Sigmoid colon (tissue), 7 donors: ENCODE measurements at regions of chr13 and their contacts with region 1.

Region 1: DNA sequence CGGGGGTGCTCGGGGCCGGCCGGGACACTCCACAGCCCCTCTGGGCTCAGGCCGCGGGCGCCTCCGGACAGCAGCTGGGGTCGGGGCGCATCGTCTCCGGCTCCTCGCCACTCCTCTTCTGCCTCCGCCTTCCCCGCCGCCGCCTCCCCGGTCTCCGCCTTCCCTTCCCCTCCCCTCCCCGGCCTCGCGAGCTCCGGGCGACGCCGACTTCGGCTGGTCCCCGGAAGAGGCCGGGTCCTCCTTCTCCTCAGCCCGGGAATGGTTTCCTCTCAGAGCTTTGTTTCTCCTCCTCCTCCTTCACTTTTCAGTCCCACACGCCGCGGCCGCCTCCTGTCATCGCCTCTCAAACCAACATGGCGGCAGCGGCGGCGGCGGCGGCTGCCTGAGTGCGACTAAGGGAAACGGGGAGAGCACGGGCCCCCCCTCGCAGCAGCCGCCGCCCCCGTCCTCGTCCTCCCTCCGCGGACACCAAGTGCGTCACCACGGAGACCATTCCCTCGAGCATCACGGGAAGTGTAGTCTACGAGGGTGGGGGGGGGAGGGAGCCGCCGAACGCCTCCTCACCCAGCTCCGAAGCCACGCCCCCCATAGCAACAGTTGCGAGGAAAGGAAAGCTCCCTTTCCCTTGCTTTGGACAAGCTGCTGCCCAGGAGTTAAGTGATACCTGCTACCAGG is at the start of gene UBL3:
- DNase-seq: peak; percentile 99
- H3K4me3 ChIP-seq: peak within 1 kb of the TSS; percentile 84 to 92 (median 88)
- H3K27ac ChIP-seq: peak within 1 kb of the TSS; percentile 97 to 99 (median 98)
- H3K4me1 ChIP-seq: peaks cover 0 to 22% (median 17%) of the 10 kb centered on the region in 4 donors
- H3K27me3 ChIP-seq: no peaks in the 10 kb centered on the region
- CTCF ChIP-seq: no peak
- EP300 ChIP-seq: peak in 1 of 4 donors; percentile 36
- POLR2A ChIP-seq: peak; percentile 71 to 80
- total RNA-seq, gene UBL3: 35.6 to 44.6 (median 40.6) TPM

Region 2: DNA sequence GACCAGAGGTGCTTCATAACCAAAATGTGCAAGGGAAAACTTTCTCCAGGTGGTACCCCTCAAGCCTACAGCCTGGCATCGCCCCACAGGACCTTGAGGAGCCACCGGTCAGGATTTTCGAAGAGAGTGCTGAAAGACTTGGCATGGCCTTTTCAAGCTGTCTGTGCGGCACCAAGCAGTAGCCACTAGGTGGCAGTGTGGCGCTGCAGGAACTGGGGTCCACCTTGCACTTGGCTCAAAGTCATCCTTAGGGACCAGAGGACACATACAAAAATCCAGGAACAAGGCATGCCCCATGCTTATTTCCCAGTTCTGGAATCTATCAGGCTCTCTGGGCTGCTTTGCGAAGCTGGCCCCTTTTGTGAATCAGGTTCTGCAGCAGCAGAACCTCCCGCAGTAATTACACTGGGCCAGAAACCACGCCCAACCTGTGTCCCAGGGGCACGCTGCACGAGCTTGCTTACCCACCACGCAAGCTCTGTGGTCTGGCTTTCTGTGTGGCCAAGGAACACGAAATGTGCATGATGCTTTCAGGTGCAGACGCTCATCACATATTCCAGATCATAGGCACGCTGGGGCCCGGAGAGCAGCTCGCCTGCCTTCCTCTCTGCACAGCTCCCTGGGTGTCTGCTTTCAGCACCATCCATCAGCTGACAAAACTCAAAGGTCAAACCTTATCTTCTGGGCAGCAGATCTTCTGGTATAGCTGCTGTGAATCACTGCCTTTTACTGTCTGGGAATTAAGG is 342.1 kb before region 1 on chr13:
- intact Hi-C with region 1: loop called (anchors 2 kb)
- DNase-seq: peak; percentile 93
- H3K4me3 ChIP-seq: no peak overlapping the region
- H3K27ac ChIP-seq: peak overlapping the region in 2 of 4 donors; percentile 12 to 58
- H3K4me1 ChIP-seq: peaks cover 0 to 34% (median 28%) of the 10 kb centered on the region in 4 donors
- H3K27me3 ChIP-seq: no peaks in the 10 kb centered on the region
- CTCF ChIP-seq: peak; percentile 86 to 98 (median 94)
- EP300 ChIP-seq: no peak
- POLR2A ChIP-seq: no peak

Region 3: DNA sequence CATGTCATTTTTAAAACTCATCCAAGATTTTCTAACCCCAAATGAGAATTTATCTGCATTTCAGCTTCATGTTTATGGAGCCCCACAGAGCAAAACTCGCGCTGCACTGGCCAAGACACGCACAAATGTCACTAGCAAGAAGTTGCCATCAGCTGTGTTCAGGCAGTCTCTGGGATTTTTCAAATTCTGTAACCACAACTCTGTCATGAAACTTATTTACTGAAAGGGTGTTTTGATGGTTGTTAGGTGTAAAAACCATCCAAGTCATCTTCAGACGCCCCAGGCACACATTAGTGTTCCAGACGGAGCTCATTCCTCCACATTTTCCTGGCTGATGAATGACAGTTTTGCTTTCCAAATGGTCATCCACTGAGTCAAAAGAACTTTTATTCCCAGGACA is 318.2 kb before region 1 on chr13:
- intact Hi-C with region 1: no loop called
- DNase-seq: no peak
- H3K4me3 ChIP-seq: no peak overlapping the region
- H3K27ac ChIP-seq: no peak overlapping the region
- H3K4me1 ChIP-seq: peaks cover 0 to 20% (median 2%) of the 10 kb centered on the region in 4 donors
- H3K27me3 ChIP-seq: no peaks in the 10 kb centered on the region
- CTCF ChIP-seq: no peak
- EP300 ChIP-seq: no peak
- POLR2A ChIP-seq: no peak

Region 4: DNA sequence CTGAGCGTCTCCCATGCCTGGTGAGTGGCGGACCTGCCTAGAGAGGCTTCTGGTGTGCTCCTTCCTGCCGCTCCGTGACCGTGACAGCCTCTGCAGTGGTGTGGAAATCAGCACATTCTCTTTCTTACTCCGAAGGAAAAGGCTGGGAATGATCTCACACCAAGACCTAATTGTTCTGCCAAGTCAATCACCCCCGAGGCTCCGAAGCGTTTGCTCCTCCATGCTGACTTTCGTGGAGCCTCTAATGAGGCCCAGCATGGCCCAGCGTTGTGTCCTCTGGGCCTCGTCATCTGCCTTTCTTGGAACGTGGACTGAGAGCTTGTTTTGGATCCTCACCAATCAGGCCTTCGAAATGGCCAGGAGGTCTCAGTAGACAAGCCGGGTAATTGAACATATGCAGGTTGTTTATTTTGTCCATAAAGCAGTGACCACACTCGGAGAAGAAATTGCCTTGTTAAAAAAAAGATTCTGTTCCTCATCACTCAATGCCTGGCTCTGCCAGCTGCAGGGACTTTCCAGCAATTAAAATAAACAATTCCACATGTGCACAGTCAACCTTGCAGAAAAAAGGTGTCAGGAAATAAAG is 107.1 kb before region 1 on chr13:
- intact Hi-C with region 1: loop called (anchors 5 kb)
- DNase-seq: peak; percentile 96
- H3K4me3 ChIP-seq: peak overlapping the region in 1 of 4 donors; percentile 15
- H3K27ac ChIP-seq: peak overlapping the region; percentile 52 to 86 (median 82)
- H3K4me1 ChIP-seq: peaks cover 0 to 30% (median 24%) of the 10 kb centered on the region in 4 donors
- H3K27me3 ChIP-seq: no peaks in the 10 kb centered on the region
- CTCF ChIP-seq: no peak
- EP300 ChIP-seq: peak; percentile 48 to 80 (median 72)
- POLR2A ChIP-seq: no peak

Region 5: GRCh38 chr13:29771247-29771646 is 79.1 kb before region 1 on chr13:
- intact Hi-C with region 1: loop called (anchors 5 kb)
- DNase-seq: no peak
- H3K4me3 ChIP-seq: no peak overlapping the region
- H3K27ac ChIP-seq: no peak overlapping the region
- H3K4me1 ChIP-seq: no peaks in the 10 kb centered on the region
- H3K27me3 ChIP-seq: no peaks in the 10 kb centered on the region
- CTCF ChIP-seq: peak in 2 of 4 experiments; percentile 24 to 47
- EP300 ChIP-seq: no peak
- POLR2A ChIP-seq: no peak

Region 6: DNA sequence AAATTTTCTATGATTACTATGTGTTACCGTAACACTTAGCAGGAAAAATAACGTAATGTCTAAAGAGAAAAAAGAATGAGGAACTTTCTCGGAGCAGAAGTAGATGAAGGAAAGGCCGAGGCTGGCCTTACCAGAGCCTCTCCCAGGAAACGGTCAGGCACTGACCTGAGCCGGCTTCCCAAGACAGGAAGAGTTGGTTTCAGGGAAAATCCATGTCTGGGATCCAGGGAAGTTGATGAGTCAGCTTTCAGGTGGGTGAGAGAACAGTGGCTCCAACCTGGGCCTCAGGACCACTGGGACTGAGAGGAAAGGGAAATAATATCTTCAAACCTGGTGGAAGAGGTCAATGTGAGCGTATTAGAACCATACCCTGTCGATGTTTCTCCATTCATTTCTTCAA is 93.3 kb after region 1 on chr13:
- intact Hi-C with region 1: loop called (anchors 5 kb)
- DNase-seq: no peak
- H3K4me3 ChIP-seq: no peak overlapping the region
- H3K27ac ChIP-seq: no peak overlapping the region
- H3K4me1 ChIP-seq: no peaks in the 10 kb centered on the region
- H3K27me3 ChIP-seq: no peaks in the 10 kb centered on the region
- CTCF ChIP-seq: no peak
- EP300 ChIP-seq: no peak
- POLR2A ChIP-seq: no peak